ENCODE measurements at regions of chr2 and their contacts with region 1.

Region 1: DNA sequence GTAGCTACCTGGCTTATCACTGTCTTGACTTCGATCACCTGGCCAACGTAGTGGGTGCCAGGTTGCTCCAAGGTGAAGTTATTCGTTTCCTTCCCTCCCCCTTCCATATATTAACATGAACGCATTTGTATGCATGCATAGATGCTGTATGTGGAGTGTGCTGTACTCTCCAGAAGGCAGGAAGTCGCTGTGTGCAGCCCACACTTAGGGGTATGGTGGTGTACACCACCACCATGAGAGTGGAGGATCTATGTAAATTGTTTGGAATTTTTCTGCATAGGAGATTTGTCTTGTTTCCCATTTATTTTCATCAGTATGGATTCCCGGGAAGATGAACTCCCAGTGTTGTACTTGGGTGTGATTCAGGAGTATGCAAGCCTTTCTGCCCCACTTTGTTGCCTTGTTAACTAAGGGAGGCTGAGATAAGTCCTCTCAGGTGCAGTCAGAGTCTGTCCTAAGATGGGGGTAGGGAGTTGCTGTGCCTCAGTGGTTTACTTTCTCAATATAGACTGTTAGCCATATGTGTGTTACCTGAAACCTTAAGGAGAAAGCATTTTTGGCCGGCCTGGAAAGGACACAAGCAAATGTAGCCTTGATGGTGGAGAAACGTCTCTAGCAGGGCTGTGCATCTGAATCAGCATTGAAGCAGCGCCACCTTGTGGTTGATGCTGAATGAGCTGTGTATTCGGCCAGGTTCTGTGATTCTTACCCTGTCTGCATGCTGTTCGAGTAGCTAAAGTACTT is 149.8 kb downstream of the TANC1 start:
- DNase-seq: peak; percentile 54 to 89 (median 79)
- ATAC-seq: peak; percentile 75
- H3K4me3 ChIP-seq: no peak overlapping the region
- H3K4me3 Mint-ChIP-seq: no peak overlapping the region
- H3K27ac ChIP-seq: no peak overlapping the region
- H3K27ac Mint-ChIP-seq: no peak overlapping the region
- H3K4me1 ChIP-seq: no peaks in the 10 kb centered on the region
- H3K4me1 Mint-ChIP-seq: peaks cover 12% of the 10 kb centered on the region
- H3K27me3 ChIP-seq: no peaks in the 10 kb centered on the region
- H3K27me3 Mint-ChIP-seq: no peaks in the 10 kb centered on the region
- CTCF ChIP-seq: peak; percentile 80

Region 2: GRCh38 chr2:159035790-159036411 is 82.4 kb before region 1 on chr2:
- CTCF ChIA-PET with region 1: interaction called, 87 read pairs
- POLR2A ChIA-PET with region 1: interaction called, 8 read pairs
- intact Hi-C with region 1: loop called in 1 of 2 experiments (anchors 1 kb)
- DNase-seq: peak in 4 of 9 experiments; percentile 26 to 52 (median 40)
- ATAC-seq: peak; percentile 56
- H3K4me3 ChIP-seq: no peak overlapping the region
- H3K4me3 Mint-ChIP-seq: no peak overlapping the region
- H3K27ac ChIP-seq: no peak overlapping the region
- H3K27ac Mint-ChIP-seq: no peak overlapping the region
- H3K4me1 ChIP-seq: no peaks in the 10 kb centered on the region
- H3K4me1 Mint-ChIP-seq: no peaks in the 10 kb centered on the region
- H3K27me3 ChIP-seq: no peaks in the 10 kb centered on the region
- H3K27me3 Mint-ChIP-seq: no peaks in the 10 kb centered on the region
- CTCF ChIP-seq: no peak

Region 3: GRCh38 chr2:159094173-159094737 is 24.0 kb before region 1 on chr2:
- CTCF ChIA-PET with region 1: interaction called, 14 read pairs
- POLR2A ChIA-PET with region 1: interaction called, 5 read pairs
- intact Hi-C with region 1: no loop called
- DNase-seq: peak in 2 of 9 experiments; percentile 16 to 21
- ATAC-seq: peak; percentile 56
- H3K4me3 ChIP-seq: no peak overlapping the region
- H3K4me3 Mint-ChIP-seq: no peak overlapping the region
- H3K27ac ChIP-seq: no peak overlapping the region
- H3K27ac Mint-ChIP-seq: peak overlapping the region; percentile 82
- H3K4me1 ChIP-seq: peaks cover 40% of the 10 kb centered on the region
- H3K4me1 Mint-ChIP-seq: peaks cover 57% of the 10 kb centered on the region
- H3K27me3 ChIP-seq: no peaks in the 10 kb centered on the region
- H3K27me3 Mint-ChIP-seq: no peaks in the 10 kb centered on the region
- CTCF ChIP-seq: no peak

Region 4: DNA sequence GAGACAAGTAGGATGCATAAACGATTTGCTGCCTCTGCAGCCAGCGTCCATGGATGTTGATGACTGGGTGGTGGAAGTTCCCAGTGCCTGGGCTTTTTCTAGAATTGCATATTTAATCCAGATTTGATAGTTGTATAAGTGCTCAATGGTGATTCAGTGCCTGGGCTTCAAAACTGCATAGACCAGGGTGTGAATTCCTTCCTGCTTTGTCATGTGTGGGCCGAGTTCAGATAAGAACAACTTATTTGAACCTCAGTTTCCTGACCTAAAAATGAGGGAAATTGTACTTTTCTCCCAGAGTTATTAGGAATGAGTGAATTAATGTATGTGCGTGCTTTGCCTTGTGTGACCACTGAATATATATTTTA is 13.6 kb after region 1 on chr2:
- CTCF ChIA-PET with region 1: interaction called, 24 read pairs
- POLR2A ChIA-PET with region 1: no interaction called
- intact Hi-C with region 1: no loop called
- DNase-seq: no peak
- ATAC-seq: no peak
- H3K4me3 ChIP-seq: no peak overlapping the region
- H3K4me3 Mint-ChIP-seq: no peak overlapping the region
- H3K27ac ChIP-seq: no peak overlapping the region
- H3K27ac Mint-ChIP-seq: no peak overlapping the region
- H3K4me1 ChIP-seq: no peaks in the 10 kb centered on the region
- H3K4me1 Mint-ChIP-seq: peaks cover 7% of the 10 kb centered on the region
- H3K27me3 ChIP-seq: no peaks in the 10 kb centered on the region
- H3K27me3 Mint-ChIP-seq: no peaks in the 10 kb centered on the region
- CTCF ChIP-seq: no peak

Region 5: DNA sequence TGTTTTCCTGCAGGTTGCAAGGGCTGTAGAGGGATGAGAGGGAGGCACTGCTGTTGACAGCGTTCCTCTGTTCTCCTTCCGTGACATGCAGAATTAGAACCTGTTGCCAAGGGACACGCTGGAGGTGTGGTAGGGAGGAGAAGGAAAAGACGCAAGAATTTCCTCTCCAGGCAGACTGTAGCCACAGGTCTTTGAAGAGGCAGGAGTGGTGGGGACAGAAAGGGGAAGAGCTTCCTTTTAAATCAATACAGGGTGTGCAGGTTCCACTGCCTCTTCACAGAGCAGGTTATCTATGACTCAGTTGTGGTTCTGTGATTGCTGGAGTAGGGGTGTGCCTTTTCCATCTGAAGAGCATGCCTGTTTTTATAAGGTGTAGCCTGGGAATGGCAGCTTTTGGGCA is 35.2 kb after region 1 on chr2:
- CTCF ChIA-PET with region 1: interaction called, 11 read pairs
- POLR2A ChIA-PET with region 1: no interaction called
- intact Hi-C with region 1: no loop called
- DNase-seq: no peak
- ATAC-seq: no peak
- H3K4me3 ChIP-seq: no peak overlapping the region
- H3K4me3 Mint-ChIP-seq: no peak overlapping the region
- H3K27ac ChIP-seq: no peak overlapping the region
- H3K27ac Mint-ChIP-seq: no peak overlapping the region
- H3K4me1 ChIP-seq: peaks cover 20% of the 10 kb centered on the region
- H3K4me1 Mint-ChIP-seq: peaks cover 21% of the 10 kb centered on the region
- H3K27me3 ChIP-seq: no peaks in the 10 kb centered on the region
- H3K27me3 Mint-ChIP-seq: no peaks in the 10 kb centered on the region
- CTCF ChIP-seq: no peak

Region 6: DNA sequence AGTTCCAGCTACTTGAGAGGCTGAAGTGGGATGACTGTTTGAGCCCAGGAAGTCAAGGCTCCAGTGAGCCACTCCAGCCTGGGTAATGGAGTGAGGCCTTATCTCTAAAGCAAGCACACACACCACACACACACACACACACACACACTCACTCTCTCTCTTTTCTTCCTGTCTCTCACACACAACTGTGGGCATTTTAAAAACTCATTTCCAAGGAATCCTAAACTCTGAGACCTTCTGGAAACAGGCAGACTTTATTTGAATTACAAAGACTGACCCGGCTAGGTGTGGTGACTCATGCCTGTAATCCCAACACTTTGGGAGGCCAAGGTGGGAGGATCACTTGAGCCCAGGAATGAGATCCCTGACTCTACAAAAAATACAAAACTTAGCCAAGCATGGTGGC is 146.9 kb after region 1 on chr2:
- CTCF ChIA-PET with region 1: no interaction called
- POLR2A ChIA-PET with region 1: no interaction called
- intact Hi-C with region 1: no loop called
- DNase-seq: no peak
- ATAC-seq: no peak
- H3K4me3 ChIP-seq: no peak overlapping the region
- H3K4me3 Mint-ChIP-seq: no peak overlapping the region
- H3K27ac ChIP-seq: no peak overlapping the region
- H3K27ac Mint-ChIP-seq: no peak overlapping the region
- H3K4me1 ChIP-seq: no peaks in the 10 kb centered on the region
- H3K4me1 Mint-ChIP-seq: no peaks in the 10 kb centered on the region
- H3K27me3 ChIP-seq: no peaks in the 10 kb centered on the region
- H3K27me3 Mint-ChIP-seq: no peaks in the 10 kb centered on the region
- CTCF ChIP-seq: no peak

Measured in CD8-positive, alpha-beta T cell (primary cell).